Posterior cingulate gyrus (tissue), 11 donors: ENCODE measurements at regions of chr3 and their contacts with region 1.

Region 1: DNA sequence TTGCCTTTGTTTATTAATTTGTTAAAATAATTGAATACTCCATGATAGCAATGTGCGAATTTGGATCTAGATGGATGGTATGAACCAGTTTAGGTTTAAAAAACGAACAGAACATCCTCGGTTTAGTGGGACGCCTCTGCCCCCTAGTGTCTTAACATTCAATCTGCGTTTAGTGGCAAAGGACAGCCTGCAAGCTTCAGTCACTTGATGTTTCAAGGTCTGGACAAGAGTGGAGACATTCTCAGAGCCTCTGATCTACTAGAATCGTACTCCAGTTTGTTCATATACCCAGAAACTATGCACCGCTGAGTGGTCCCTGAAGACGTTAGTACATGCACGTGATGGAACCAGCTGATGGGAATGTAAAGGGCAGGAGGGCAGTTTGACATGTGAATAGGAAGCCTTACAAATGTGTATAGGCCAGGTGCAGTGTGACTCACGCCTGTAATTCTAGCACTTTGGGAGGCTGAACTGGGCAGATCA is 17.8 kb upstream of the ATP13A4 start:
- DNase-seq: peak in 6 of 10 donors; percentile 60 to 93 (median 69)

Region 2: DNA sequence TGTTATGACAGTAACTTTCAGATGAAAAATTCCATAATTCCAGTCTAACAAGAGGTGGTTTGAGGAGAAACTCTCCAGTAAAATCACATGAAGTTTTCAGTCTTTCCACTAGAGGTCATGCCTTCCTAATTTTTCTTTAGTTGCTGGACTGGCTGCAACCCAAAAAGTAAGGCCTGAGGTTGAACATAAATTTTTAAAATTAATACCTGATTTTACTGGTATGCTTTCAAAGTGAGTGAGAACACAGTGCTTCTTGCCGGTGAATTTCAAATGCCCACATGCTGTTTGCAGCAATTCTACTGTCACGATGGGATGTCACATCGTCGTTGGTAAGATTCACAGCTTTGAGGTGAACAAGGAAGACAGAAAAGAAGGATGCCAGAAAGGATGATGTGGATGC is 756.1 kb before region 1 on chr3:
- intact Hi-C with region 1: loop called (anchors 1 kb)
- DNase-seq: no peak

Region 3: GRCh38 chr3:193040836-193041672 is 531.4 kb before region 1 on chr3:
- intact Hi-C with region 1: loop called (anchors 5 kb)
- DNase-seq: no peak

Region 4: DNA sequence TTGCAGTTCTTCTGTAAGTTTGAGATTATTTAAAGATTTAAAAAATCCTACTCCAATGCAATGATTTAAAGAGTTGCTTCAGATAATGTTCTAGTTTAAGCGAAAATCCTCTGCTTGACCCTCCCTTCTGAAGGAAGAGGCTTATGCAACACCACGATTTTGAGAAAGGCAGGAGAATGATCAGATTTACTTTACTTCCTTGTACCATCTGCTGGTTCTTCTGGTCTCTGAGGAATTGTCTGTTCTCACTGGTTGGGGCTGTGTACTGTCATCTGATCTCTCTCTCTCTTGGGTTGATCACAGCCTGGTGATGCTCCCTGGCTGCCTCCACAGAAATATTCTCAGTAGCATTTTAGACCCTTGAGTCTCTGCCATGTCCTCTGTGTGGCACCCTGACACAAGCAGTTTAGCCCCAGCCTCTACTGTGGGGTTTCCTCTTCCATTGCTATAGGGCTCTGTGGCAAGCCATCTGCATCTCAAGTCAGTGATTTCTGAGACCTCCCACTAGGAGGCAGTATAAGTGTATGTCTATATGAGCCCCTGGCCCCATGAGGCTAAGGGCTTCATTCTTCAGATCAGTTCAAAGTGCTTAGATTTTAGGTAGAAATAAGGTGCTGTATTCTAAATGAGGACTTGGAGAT is 382.2 kb before region 1 on chr3:
- intact Hi-C with region 1: loop called (anchors 1 kb)
- DNase-seq: peak in 1 of 10 donors; percentile 54

Region 5: GRCh38 chr3:193457526-193457925 is 114.9 kb before region 1 on chr3:
- intact Hi-C with region 1: loop called (anchors 5 kb)
- DNase-seq: no peak